Left cardiac atrium (tissue), 4 donors: ENCODE measurements at regions of chr19 and their contacts with region 1.

Region 1: DNA sequence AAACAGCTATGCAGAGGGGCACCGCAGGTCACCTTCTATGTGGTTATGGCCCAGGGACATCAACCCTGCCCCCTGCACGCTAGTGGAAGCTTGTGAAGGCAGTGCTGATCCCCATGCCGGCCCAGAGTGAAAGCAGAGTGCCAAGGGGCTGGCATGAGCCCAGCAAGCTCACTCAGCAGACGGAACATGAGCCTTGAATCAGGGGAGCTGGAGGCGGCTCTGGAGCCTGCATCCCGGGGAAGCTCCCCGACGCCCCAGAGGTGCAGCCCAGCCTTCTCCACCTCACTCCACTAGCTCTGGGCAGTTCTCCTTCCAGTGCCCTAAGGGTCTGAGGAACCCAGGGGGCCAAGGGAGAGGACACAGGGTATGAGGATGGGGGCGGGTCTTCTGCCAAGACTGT is 19.0 kb upstream of the ISYNA1 start:
- DNase-seq: peak; percentile 69
- ATAC-seq: peak; percentile 2 to 45

Region 2: GRCh38 chr19:18571564-18572300 is 114.8 kb after region 1 on chr19 and contains the start of gene UBA52:
- intact Hi-C with region 1: loop called (anchors 5 to 10 kb)
- DNase-seq: peak; percentile 98
- ATAC-seq: peak; percentile 96 to 99
- total RNA-seq, gene UBA52: 696 to 720 TPM